HEK293 (cell line): ENCODE measurements at regions of chrX and their contacts with region 1.

Region 1: GRCh38 chrX:20244931-20245330 is 21.8 kb downstream of the RPS6KA3 start:
- H3K4me3 ChIP-seq: no peak overlapping the region
- H3K27ac ChIP-seq: no peak overlapping the region
- H3K4me1 ChIP-seq: no peaks in the 10 kb centered on the region
- CTCF ChIP-seq: no peak

Region 2: DNA sequence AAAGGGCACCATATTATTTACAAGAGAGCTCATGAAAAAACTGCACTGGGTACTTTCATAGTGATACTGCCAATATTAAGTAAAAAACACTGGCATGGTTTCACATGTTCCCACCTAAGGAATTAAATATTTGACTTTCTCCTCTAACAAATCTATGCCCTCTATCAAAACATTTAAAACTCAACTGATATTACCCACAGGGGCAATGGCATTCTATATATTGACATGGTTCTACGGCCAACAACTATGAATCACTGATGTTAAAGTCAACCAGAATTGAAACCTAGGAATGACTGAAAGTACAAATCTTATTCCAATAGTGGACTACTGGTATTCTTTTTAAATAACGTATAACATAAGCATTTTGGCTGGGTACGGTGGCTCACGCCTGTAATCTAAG is 1289.3 kb before region 1 on chrX:
- CTCF ChIA-PET with region 1: no interaction called
- POLR2A ChIA-PET with region 1: interaction called, 11 read pairs
- H3K4me3 ChIP-seq: no peak overlapping the region
- H3K27ac ChIP-seq: no peak overlapping the region
- H3K4me1 ChIP-seq: no peaks in the 10 kb centered on the region
- CTCF ChIP-seq: no peak